Transverse colon (tissue), 4 donors: ENCODE measurements at regions of chr21 and their contacts with region 1.

Region 1: GRCh38 chr21:15301014-15301413 is 236.2 kb upstream of the NRIP1 start:
- DNase-seq: no peak
- H3K4me3 ChIP-seq: no peak overlapping the region
- H3K27ac ChIP-seq: no peak overlapping the region
- H3K4me1 ChIP-seq: no peaks in the 10 kb centered on the region
- H3K27me3 ChIP-seq: no peaks in the 10 kb centered on the region
- CTCF ChIP-seq: no peak
- EP300 ChIP-seq: no peak
- POLR2A ChIP-seq: no peak

Region 2: DNA sequence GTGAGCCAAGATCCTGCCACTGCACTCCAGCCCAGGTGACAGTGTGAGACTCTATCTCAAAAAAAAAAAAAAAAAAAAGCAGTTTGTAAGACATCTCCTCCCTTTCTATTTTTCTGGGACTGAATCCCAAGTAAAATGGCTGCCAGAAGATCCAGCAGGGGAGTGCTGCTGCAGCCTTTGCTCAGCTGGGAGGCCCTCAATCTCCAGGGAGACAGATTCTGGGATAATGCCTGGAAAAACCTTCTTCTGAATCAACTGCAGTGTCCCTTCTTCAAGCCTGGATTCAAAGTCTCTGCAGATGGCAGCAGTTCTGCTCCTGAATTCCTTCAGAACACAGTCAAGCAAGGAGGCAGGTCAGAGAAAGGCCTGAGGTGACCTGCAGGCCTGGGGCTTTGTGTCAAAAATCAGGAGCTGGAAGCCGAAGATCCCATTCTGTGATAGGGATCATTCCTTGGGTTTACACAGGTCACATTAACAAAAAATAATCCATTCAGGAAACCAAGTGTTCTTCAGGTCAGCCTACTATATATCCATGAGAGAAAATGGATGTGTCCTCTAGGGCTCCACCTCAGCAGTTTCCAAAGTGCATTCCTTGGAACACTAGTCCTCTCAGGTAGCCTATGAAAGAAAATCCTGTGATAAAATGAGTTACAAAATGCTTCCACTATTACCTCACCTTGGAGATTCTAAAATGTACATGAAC is 45.1 kb before region 1 on chr21:
- in situ Hi-C with region 1: no loop called
- intact Hi-C with region 1: loop called (anchors 2 kb)
- DNase-seq: no peak
- H3K4me3 ChIP-seq: no peak overlapping the region
- H3K27ac ChIP-seq: no peak overlapping the region
- H3K4me1 ChIP-seq: no peaks in the 10 kb centered on the region
- H3K27me3 ChIP-seq: no peaks in the 10 kb centered on the region
- CTCF ChIP-seq: no peak
- EP300 ChIP-seq: no peak
- POLR2A ChIP-seq: no peak